ENCODE measurements at regions of chr7 and their contacts with region 1.

Region 1: GRCh38 chr7:64665980-64666662 is at the start of gene ZNF107:
- DNase-seq: peak; percentile 95
- H3K4me3 Mint-ChIP-seq: peak within 1 kb of the TSS; percentile 97
- H3K27ac Mint-ChIP-seq: peak within 1 kb of the TSS; percentile 97
- H3K4me1 Mint-ChIP-seq: peaks cover 17% of the 10 kb centered on the region
- H3K27me3 Mint-ChIP-seq: no peaks in the 10 kb centered on the region
- total RNA-seq, gene ZNF107: 13.0 and 13.3 TPM in 2 replicates

Region 2: DNA sequence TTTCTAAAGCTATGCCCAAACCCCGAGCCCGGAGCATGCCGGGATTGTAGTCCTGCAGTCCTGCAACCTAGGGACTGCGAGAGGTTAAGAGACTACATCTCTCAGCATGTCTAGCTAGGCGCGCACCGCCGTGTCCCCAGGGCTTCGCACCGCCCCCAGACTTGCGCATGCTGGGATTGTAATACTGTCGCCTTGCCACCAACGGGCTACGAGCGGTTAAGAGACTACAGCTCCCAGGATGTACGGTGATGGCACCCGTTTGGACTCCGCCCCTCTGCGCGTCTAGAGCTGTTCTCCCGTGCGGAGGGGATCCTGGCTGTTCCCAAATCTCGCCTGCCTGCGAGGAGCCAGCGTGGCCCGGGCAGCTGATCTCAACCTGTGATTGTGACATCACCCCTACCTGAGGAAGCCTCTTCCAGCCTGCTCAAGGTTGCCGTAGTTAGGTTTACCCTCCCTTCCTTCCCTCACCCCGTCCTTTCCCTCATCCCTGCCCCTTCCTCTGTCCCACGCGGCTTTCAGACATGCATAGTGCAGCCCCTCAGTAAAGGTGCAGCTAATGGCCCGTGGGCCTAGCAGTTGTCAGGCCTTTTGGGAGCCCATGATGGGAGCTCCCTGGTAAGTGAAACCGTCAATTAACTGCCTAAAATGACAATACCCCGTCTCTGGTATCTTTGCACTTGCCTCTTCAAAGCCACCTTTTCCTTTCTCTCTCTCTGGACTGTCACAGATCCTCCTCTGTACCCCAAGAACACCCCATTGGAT is 358.7 kb before region 1 on chr7:
- intact Hi-C with region 1: loop called (anchors 2 kb)
- DNase-seq: peak; percentile 97
- H3K4me3 Mint-ChIP-seq: peak overlapping the region; percentile 97
- H3K27ac Mint-ChIP-seq: peak overlapping the region; percentile 93
- H3K4me1 Mint-ChIP-seq: peaks cover 14% of the 10 kb centered on the region
- H3K27me3 Mint-ChIP-seq: no peaks in the 10 kb centered on the region

Region 3: GRCh38 chr7:64625114-64626082 is 40.7 kb before region 1 on chr7:
- intact Hi-C with region 1: no loop called
- DNase-seq: no peak
- H3K4me3 Mint-ChIP-seq: no peak overlapping the region
- H3K27ac Mint-ChIP-seq: no peak overlapping the region
- H3K4me1 Mint-ChIP-seq: no peaks in the 10 kb centered on the region
- H3K27me3 Mint-ChIP-seq: no peaks in the 10 kb centered on the region

Region 4: DNA sequence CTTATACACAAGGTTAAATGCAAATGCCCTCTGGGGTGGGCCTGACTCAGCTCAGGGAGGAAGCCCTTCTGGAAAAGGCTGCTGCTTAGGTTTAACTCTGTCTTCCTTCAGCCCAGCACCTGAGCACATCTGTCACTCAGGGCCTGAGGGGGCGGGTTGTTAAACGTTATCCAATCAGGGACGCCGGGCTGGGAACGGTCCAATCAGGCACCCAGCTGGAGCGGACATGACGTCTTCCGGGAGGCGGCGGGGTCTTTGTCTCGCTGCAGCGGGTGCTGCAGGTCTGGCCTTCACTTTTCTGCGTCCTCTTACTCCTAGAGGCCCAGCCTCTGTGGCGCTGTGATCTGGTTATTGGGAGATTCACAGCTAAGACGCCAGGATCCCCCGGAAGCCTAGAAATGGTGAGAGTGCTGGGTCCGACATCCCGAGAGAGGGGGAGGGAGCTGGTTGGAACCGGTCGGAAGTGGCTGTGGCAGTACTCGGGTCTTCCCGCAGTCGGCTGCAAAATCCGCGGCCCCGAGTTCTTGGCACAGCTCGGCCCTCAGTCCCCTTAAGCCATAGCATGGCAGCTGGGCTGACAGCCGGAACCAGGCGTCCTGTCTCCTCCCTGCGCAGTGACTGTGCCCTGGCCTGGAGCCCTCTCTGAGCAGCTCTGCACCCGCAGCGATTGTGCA is 128.2 kb after region 1 on chr7 and contains the start of gene ZNF138:
- intact Hi-C with region 1: loop called (anchors 1 kb)
- DNase-seq: peak; percentile 97
- H3K4me3 Mint-ChIP-seq: peak within 1 kb of the TSS; percentile 100
- H3K27ac Mint-ChIP-seq: peak within 1 kb of the TSS; percentile 97
- H3K4me1 Mint-ChIP-seq: peaks cover 13% of the 10 kb centered on the region
- H3K27me3 Mint-ChIP-seq: no peaks in the 10 kb centered on the region
- total RNA-seq, gene ZNF138: 8.6 and 9.2 TPM in 2 replicates

Region 5: GRCh38 chr7:65006094-65006992 is 340.2 kb after region 1 on chr7 and contains the start of gene ERV3-1:
- intact Hi-C with region 1: loop called (anchors 10 kb)
- DNase-seq: peak; percentile 97
- H3K4me3 Mint-ChIP-seq: peak within 1 kb of the TSS; percentile 98
- H3K27ac Mint-ChIP-seq: peak within 1 kb of the TSS; percentile 95
- H3K4me1 Mint-ChIP-seq: peaks cover 26% of the 10 kb centered on the region
- H3K27me3 Mint-ChIP-seq: no peaks in the 10 kb centered on the region
- total RNA-seq, gene ERV3-1: 7.4 and 9.5 TPM in 2 replicates

Region 6: GRCh38 chr7:65373608-65374351 is 707.7 kb after region 1 on chr7 and contains the start of gene ZNF92:
- intact Hi-C with region 1: loop called (anchors 10 kb)
- DNase-seq: peak; percentile 99
- H3K4me3 Mint-ChIP-seq: peak within 1 kb of the TSS; percentile 99
- H3K27ac Mint-ChIP-seq: peak within 1 kb of the TSS; percentile 96
- H3K4me1 Mint-ChIP-seq: peaks cover 24% of the 10 kb centered on the region
- H3K27me3 Mint-ChIP-seq: no peaks in the 10 kb centered on the region
- total RNA-seq, gene ZNF92: 12.9 and 15.0 TPM in 2 replicates